ENCODE measurements at regions of chr10 and their contacts with region 1.

Region 1: DNA sequence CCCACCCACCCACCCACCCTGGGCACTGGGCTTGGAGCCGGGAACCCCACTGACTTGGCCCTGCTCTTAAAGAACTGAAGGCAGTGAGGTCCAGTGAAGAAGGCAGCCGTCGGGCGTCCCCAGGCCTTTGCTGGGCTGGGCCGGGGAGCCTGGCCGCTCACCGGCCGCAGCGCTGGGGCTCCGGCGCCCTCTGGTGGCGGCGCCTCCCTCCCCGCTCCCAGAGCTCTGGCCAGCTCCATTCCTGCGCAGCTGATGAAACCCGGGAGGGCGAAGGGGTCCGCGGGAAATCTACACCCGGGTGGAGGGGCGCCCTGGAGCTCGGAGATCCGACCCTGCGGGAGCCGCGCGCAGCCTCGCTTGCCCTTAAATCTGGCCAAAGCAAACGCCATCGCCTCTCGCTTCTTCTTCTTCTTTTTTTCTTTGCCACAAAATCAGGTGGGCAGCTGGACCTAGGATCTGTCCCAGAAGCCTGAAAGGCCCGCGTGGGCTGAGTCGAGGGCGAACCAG is 1.7 kb upstream of the CXCL12 start:
- DNase-seq: peak in 8 of 10 donors; percentile 32 to 94 (median 60)

Region 2: DNA sequence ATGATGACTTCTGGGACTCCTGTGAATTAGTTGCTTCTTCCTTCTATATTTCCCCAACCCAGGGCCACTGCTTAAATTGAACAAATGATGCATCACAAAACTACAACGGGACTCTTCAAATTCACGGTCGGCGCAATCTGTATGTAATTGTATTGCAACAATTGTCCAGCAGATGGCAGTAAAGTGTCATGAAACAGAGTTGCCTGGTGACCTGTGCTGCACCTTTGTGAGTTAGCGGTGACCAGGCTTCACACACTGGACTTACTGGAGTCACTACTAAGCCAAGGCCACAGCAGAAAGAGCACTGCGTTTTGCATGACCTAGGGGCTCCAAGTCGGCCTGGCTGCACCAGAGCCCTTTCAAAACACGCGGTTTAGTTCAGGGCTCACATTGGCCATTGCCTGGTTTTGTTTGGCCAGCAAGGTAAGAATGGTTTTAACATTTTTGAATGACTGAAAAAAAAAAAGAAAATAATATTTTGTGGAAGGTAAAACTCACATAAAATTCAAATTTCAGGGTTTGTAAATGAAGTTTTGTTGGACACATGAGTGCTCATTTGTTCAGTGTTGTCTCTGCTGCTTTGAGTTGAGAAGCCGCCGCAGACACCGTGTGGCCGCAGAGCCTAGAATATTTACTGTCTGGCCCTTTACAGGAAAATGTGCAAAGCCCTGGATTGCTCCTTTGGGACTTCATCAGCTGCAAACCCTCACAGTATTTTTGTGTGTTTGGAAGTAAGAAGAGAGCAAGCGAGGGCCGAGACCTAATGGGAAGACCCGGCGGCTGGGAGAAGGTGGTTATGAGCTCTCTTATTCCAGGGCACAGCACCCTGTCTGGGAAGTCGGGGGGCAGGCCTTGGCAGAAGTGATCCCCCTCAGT is 714.7 kb before region 1 on chr10:
- intact Hi-C with region 1: loop called (anchors 1 kb)
- DNase-seq: peak in 2 of 10 donors; percentile 27 to 69

Region 3: DNA sequence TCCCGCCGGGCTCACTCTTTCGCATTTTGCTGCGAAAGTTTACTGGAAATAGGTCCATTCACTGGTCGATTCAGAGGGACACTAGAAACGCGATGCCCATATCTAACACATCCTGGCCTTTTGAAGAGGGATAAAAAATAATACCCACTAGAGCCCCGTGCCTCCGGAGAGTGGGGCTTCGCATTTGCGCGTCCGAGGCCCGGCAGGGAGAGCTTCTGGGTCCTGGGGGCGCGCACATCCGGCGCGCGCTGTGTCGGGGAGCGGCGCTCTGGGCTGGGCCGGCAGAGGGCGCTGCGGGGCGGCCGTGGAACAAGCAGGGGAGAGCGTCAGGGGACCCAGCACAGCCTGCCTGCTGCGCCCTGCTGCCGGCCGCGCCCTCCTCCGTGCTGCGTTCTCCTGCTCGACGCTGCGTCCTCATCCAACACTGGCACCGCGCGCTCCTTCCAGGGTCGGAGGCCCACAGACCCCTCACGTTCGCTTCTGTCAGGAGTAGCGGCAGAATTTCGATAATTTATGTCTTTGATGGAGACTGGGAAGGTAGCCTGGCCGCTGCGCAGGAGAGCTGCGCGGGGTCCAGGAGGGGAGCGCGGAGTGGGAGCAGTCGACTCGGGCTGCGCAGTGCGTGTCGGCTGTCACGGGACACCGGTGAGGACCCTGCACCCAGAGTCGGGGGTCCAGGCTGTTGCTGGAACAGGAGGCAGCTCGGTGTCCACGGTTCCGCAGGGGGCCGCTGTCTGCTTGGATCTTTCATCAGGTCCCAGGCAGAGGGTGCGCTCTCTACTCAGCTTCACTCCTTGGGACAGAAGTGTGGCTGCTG is 696.4 kb before region 1 on chr10:
- intact Hi-C with region 1: loop called (anchors 1 kb)
- DNase-seq: peak; percentile 70 to 97 (median 82)

Region 4: DNA sequence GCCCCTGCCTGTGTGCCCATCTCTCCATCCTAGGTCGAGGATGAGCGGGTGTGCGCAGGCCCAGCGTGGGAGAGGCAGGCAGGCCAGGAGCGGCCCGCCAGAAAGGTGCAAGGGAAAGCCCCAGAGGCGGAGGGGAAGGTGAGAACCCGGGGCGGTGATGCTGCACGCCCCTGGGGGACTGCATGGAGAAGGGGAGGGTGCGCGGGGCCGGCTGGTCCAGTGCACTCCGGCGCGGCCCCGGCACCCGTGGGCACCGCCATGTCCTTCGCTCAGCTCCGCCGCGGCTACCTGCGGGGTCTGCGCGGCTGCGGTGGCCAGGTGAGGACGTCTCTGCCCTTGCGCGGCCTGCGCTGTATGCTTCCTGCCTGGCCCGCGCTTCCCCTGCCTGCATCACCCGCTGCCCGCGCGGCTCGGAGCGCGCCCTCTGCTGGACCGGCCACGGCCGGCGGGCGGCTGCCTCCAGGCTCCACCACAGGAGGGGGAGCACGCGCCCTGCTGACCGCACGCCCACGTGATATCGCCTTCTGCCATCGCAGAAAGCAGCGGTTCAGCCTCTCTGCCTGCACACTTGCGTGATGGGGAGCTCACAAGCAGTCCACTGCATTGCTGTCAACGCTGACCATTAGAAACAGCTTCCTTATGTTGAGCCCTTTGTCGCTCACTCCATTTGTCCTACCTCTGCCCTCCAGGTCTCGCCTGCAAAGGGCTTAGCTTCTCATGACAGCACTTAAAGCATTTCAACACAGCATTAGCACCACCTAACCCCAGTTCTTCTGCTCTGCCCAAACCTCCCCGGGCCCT is 75.6 kb before region 1 on chr10:
- intact Hi-C with region 1: loop called (anchors 5 kb)
- DNase-seq: peak; percentile 73 to 98 (median 86)

Region 5: DNA sequence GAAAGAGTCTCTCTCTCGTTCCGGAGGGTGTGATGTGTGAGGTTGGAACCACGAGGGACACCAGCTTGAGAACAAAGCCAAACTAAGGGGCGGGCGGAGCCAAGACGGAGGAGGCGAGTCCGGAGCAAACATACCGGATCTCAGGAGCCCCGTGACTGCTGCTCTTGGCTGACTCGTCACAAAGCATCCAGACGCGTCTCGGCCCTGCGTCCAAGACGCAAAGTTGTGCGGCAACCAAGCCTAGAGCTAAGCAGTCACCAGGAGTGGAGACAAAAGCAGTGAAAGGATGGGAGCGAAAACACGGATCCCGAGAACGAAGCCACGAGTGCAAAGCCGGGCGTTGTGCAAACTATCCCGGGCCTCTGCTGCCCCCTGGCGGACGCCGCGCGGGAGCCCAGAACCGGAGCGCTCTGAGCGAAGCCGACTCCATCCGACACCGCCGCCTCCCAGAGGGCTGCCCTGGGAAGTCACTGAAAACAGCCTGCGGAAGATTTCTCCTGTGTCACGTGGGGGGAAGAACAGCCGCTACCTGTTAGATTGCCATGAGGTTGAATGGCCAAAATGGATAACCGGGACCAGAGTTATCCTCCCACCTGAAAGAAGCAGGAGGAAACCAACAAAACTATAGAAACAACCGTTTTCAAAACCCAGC is 478.2 kb after region 1 on chr10:
- intact Hi-C with region 1: loop called (anchors 5 kb)
- DNase-seq: peak; percentile 86 to 99 (median 94)

Region 6: GRCh38 chr10:44974628-44975431 is 588.2 kb after region 1 on chr10:
- intact Hi-C with region 1: loop called (anchors 10 kb)
- DNase-seq: peak in 8 of 10 donors; percentile 53 to 96 (median 66)